ENCODE measurements at regions of chr17 and their contacts with region 1.

Region 1: GRCh38 chr17:79294459-79295071 is 219.9 kb downstream of the ENGASE start:
- DNase-seq: peak; percentile 56
- H3K4me3 ChIP-seq: no peak overlapping the region
- H3K27ac ChIP-seq: no peak overlapping the region
- H3K4me1 ChIP-seq: no peaks in the 10 kb centered on the region
- H3K27me3 ChIP-seq: peaks cover 0 to 2% of the 10 kb centered on the region in 2 experiments
- CTCF ChIP-seq: no peak
- POLR2A ChIP-seq: no peak

Region 2: DNA sequence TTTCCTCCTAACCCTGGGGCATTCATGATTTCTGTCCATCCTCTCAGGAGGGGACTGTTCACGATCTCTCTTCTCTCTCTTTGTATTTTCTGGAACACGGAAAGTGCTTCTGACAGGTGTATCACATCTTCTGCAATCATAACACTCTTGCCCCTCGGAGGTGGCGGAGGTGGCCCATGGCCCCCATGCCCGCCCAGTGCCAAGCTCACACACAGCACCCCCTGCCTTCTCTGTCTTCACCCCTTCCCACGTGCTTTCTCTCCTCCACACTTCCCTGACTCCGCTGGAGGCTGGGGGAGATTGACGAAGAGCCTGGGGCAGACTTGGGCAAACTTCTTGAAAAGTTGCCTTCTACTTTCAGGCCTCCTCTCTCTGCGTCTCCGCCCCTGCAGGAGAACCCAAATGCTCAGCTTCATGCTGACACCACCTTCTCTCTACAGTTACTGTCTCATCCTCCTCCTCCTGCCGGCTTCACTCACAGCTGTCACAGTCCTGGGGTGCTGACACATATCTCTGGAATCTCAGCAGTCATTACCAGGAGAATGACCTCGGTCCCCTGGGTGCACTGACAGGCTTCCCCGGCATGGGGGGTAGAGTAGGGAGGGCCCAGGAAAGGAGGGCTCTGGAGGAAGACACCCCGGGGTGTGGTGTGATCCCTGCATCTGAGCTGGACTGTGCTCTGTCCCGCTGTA is 92.9 kb before region 1 on chr17:
- CTCF ChIA-PET with region 1: no interaction called
- POLR2A ChIA-PET with region 1: no interaction called
- dilution Hi-C with region 1: no loop called
- intact Hi-C with region 1: no loop called
- DNase-seq: no peak
- H3K4me3 ChIP-seq: no peak overlapping the region
- H3K27ac ChIP-seq: no peak overlapping the region
- H3K4me1 ChIP-seq: no peaks in the 10 kb centered on the region
- H3K27me3 ChIP-seq: peaks cover 0 to 1% of the 10 kb centered on the region in 2 experiments
- CTCF ChIP-seq: no peak
- POLR2A ChIP-seq: no peak

Region 3: GRCh38 chr17:79332011-79332554 is 37.5 kb after region 1 on chr17:
- CTCF ChIA-PET with region 1: no interaction called
- POLR2A ChIA-PET with region 1: no interaction called
- dilution Hi-C with region 1: no loop called
- intact Hi-C with region 1: loop called (anchors 5 kb)
- DNase-seq: no peak
- H3K4me3 ChIP-seq: no peak overlapping the region
- H3K27ac ChIP-seq: no peak overlapping the region
- H3K4me1 ChIP-seq: no peaks in the 10 kb centered on the region
- H3K27me3 ChIP-seq: no peaks in the 10 kb centered on the region
- CTCF ChIP-seq: no peak
- POLR2A ChIP-seq: no peak